Posterior vena cava (tissue), 2 donors: ENCODE measurements at regions of chr21 and their contacts with region 1.

Region 1: GRCh38 chr21:26892151-26892550 is 46.9 kb upstream of the ADAMTS1 start:
- DNase-seq: no peak

Region 2: DNA sequence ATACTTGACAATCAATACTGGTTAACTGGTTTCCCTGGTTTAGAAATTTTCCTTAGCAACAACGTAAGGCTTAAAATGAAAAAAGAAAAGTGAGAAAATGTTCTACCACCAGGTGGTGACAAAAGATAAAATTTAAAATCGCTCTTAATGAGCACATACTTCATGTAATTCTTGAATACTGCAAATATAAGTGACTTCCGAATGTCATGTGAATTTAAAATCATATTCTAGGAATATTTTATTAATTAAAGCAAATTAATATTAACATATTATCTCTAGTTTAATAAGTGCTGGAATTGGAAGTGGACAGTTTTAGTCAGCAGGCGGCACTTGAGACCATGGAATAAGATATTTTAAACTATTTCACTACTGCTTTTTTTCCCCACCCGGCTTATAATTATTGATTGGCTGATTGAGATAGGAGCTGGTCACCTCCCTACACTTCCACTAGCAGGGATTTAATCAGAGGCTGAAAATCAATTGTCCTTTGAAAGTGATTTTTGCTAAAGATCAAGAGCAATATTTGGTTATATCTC is 42.0 kb before region 1 on chr21:
- intact Hi-C with region 1: loop called in 1 of 2 experiments (anchors 1 kb)
- DNase-seq: no peak

Region 3: DNA sequence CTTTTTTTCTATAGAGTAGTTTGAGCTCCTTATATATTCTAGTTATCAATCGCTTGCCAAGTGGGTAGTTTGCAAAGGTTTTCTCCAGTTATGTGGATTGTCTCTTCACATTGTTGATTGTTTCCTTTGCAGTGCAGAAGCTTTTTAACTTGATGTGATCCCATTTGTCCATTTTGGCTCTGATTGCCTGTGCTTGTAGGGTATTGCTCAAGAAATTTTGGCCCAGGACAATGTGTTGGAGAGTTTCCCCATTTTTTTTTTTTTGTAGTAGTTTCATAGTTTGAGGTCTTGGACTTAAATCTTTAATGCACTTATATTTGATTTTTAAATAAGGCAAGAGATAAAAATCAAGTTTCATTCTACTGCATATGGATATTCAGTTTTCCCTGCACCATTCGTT is 849.6 kb after region 1 on chr21:
- intact Hi-C with region 1: loop called in 1 of 2 experiments (anchors 5 kb)
- DNase-seq: no peak